ENCODE measurements at regions of chr2 and their contacts with region 1.

Region 1: DNA sequence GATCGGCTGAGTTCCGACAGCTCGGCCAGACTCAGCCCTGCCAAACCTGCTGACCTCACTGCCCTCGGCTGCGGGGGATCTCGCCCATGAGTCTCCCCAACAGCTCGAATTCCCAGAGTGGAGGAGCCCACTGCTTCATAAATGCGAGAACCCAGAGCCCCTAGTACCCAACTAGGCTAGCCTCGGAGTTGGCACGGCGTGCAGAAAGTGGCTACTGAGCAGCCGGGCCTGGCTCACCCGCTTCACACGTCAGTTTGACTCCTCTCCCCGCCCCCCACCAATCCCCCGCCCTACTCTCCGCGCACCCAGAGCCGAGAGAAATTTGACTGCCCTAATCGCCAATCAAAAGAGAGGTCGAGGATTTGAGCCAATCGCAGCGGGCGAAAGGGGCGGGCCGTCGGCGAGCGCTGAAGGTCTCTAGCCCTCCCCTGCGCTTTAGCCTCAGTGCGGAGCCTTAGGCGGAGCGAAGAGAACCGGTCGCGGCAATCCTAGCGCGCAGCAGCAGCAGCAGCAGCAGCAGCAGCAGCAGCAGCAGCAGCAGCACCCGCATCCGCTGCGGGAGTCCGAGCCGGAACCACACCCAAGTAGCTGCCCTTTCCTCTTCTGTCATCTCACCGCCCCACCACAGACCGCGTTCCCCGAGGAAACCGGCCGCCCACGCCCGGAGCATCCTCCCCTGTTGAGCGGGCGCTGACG is at the start of gene GLS:
- DNase-seq: peak; percentile 98
- H3K4me3 Mint-ChIP-seq: peak within 1 kb of the TSS; percentile 98
- H3K27ac Mint-ChIP-seq: peak within 1 kb of the TSS; percentile 99
- H3K4me1 Mint-ChIP-seq: peaks cover 36% of the 10 kb centered on the region
- H3K27me3 Mint-ChIP-seq: peaks cover 4% of the 10 kb centered on the region
- total RNA-seq, gene GLS: 209 to 210 TPM

Region 2: GRCh38 chr2:189783927-189784867 is 1096.3 kb before region 1 on chr2 and contains the starts of genes ORMDL1 and PMS1:
- CTCF ChIA-PET with region 1: no interaction called
- POLR2A ChIA-PET with region 1: no interaction called
- intact Hi-C with region 1: loop called (anchors 5 kb)
- DNase-seq: peak; percentile 96
- H3K4me3 Mint-ChIP-seq: peak within 1 kb of the TSS; percentile 90
- H3K27ac Mint-ChIP-seq: peak within 1 kb of the TSS; percentile 95
- H3K4me1 Mint-ChIP-seq: peaks cover 52% of the 10 kb centered on the region
- H3K27me3 Mint-ChIP-seq: no peaks in the 10 kb centered on the region
- total RNA-seq, gene ORMDL1: 47.0 to 49.8 TPM
- total RNA-seq, gene PMS1: 36.0 to 38.6 TPM

Region 3: GRCh38 chr2:190328573-190329147 is 551.9 kb before region 1 on chr2:
- CTCF ChIA-PET with region 1: no interaction called
- POLR2A ChIA-PET with region 1: no interaction called
- intact Hi-C with region 1: no loop called
- DNase-seq: no peak
- H3K4me3 Mint-ChIP-seq: no peak overlapping the region
- H3K27ac Mint-ChIP-seq: no peak overlapping the region
- H3K4me1 Mint-ChIP-seq: no peaks in the 10 kb centered on the region
- H3K27me3 Mint-ChIP-seq: peaks cover 21% of the 10 kb centered on the region

Region 4: GRCh38 chr2:190679813-190680591 is 200.5 kb before region 1 on chr2:
- CTCF ChIA-PET with region 1: no interaction called
- POLR2A ChIA-PET with region 1: interaction called, 7 read pairs
- intact Hi-C with region 1: loop called (anchors 1 kb)
- DNase-seq: peak; percentile 80
- H3K4me3 Mint-ChIP-seq: peak overlapping the region; percentile 61
- H3K27ac Mint-ChIP-seq: peak overlapping the region; percentile 98
- H3K4me1 Mint-ChIP-seq: peaks cover 66% of the 10 kb centered on the region
- H3K27me3 Mint-ChIP-seq: no peaks in the 10 kb centered on the region

Region 5: GRCh38 chr2:190849774-190850173 is 30.8 kb before region 1 on chr2:
- CTCF ChIA-PET with region 1: interaction called, 43 read pairs
- POLR2A ChIA-PET with region 1: interaction called, 22 read pairs
- intact Hi-C with region 1: loop called (anchors 1 kb)
- DNase-seq: no peak
- H3K4me3 Mint-ChIP-seq: no peak overlapping the region
- H3K27ac Mint-ChIP-seq: no peak overlapping the region
- H3K4me1 Mint-ChIP-seq: peaks cover 15% of the 10 kb centered on the region
- H3K27me3 Mint-ChIP-seq: peaks cover 1% of the 10 kb centered on the region

Region 6: DNA sequence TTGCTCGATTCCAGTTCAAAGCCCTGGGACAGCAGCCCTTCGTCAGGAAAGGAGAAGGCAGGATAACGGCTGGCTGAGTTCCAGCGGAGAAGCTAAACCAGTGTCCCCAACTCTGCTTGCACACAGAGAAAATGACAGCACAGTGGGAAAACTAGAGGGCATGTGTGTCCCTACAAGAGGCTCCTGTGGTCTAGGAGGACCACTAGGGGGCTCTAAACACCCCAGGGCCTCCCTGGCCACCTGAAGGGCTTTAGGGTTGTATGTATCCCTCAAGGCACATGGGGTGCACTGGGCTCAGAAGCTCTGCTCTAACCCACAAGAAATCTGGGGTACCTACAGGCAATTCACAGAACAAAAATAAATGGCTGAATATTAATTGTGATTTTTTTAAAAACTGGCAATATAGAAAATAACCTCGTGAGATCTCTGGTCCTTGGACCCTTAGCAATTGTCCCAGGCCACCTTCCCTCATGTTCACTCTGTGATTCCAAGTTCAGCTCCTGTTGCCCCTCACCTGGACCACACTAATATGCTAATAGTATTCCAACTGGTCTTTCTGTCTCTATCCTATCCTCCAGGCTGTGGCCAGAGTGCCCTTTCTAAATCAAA is 115.9 kb after region 1 on chr2:
- CTCF ChIA-PET with region 1: no interaction called
- POLR2A ChIA-PET with region 1: no interaction called
- intact Hi-C with region 1: no loop called
- DNase-seq: no peak
- H3K4me3 Mint-ChIP-seq: no peak overlapping the region
- H3K27ac Mint-ChIP-seq: peak overlapping the region; percentile 86
- H3K4me1 Mint-ChIP-seq: peaks cover 52% of the 10 kb centered on the region
- H3K27me3 Mint-ChIP-seq: no peaks in the 10 kb centered on the region

Region 7: DNA sequence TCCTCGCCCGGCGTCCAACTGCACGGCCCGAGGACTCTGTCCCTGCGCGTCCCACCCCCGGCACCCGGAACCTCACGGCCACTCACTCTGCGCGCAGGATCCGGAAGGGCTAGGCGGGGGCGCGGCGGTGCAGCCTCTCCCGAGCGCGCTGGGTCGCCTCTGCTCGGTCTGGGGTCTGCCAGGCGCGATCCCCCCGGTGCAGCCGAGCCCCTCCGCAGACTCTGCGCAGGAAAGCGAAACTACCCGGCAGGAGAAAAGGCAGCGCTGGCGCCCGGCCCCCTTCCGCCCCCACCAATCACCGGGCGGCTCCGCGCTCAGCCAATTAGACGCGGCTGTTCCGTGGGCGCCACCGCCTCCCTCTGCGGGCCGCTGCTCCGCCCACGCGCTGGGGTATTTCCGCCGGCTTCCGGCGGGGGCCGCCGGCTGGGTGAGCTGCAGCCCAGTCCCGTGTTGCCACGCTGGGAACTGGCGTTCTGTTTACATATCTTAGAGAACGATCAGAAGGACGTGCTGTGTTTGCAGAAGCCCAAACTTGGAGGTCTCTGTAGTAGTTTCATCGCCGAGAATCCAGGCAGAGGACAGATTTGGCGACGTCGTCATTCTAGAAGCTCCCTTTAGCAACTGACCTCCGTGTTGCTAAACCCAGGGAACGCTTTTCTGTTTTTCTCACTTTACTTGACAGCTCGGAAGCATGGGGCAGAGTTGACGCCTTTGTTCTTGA is 133.6 kb after region 1 on chr2 and contains the start of gene STAT1:
- CTCF ChIA-PET with region 1: no interaction called
- POLR2A ChIA-PET with region 1: interaction called, 31 read pairs
- intact Hi-C with region 1: loop called (anchors 1 kb)
- DNase-seq: peak; percentile 97
- H3K4me3 Mint-ChIP-seq: no peak within 1 kb of the TSS
- H3K27ac Mint-ChIP-seq: no peak within 1 kb of the TSS
- H3K4me1 Mint-ChIP-seq: peaks cover 39% of the 10 kb centered on the region
- H3K27me3 Mint-ChIP-seq: no peaks in the 10 kb centered on the region
- total RNA-seq, gene STAT1: 309 to 314 TPM

Region 8: GRCh38 chr2:191617575-191617974 is 737.0 kb after region 1 on chr2:
- CTCF ChIA-PET with region 1: no interaction called
- POLR2A ChIA-PET with region 1: no interaction called
- intact Hi-C with region 1: loop called (anchors 5 kb)
- DNase-seq: peak; percentile 61
- H3K4me3 Mint-ChIP-seq: peak overlapping the region; percentile 34
- H3K27ac Mint-ChIP-seq: peak overlapping the region; percentile 94
- H3K4me1 Mint-ChIP-seq: peaks cover 58% of the 10 kb centered on the region
- H3K27me3 Mint-ChIP-seq: no peaks in the 10 kb centered on the region

Measured in activated CD4-positive, alpha-beta memory T cell treated with anti-CD3 and anti-CD28 coated beads for 36 hours (primary cell).